ENCODE measurements at regions of chr19 and their contacts with region 1.

Region 1: DNA sequence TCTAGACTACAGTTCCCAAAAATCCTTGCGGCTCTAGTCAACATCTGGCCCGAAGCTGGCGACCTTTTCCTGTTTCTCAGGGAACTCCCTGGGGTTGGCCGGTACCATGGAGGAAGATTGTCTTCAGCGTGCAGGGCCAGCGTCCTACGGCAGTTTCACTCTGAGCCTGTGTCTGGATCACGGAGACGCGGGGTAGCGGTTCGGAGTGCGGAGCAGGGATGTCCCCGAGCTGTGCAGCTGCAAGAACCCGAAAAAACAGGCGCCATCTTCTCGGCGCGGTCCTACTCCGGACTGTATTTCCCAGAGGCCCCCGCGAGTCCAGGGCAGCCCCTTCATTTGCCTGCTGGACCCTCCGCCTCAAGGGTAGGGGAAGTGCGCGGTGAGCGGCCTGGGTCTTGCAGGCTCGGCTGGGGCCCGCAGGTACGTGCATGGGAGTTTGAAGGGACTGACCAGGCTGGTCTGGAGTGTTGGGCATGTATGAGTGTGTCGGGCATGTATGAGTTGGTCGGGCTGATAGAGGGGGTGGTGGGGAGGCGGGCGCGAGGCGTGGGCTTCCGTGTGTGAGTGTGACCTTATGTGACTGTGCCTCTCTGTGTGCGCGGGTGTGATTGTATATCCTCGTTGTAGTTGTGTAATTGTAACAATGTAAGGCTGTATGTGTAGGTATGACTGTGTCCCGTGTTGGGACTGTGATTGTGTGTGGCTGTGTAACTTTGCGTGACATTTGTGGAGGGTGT is at the start of gene ZNF383:
- DNase-seq: peak; percentile 63 to 81 (median 78)
- ATAC-seq: peak; percentile 95
- H3K4me3 ChIP-seq: peak within 1 kb of the TSS; percentile 93
- H3K4me3 Mint-ChIP-seq: peak within 1 kb of the TSS; percentile 90 to 97 (median 92)
- H3K27ac ChIP-seq: peak within 1 kb of the TSS; percentile 94
- H3K27ac Mint-ChIP-seq: peak within 1 kb of the TSS; percentile 74 to 99 (median 91)
- H3K4me1 ChIP-seq: peaks cover 0 to 6% of the 10 kb centered on the region in 2 donors
- H3K4me1 Mint-ChIP-seq: peaks cover 21 to 33% (median 31%) of the 10 kb centered on the region in 7 donors
- H3K27me3 ChIP-seq: no peaks in the 10 kb centered on the region
- H3K27me3 Mint-ChIP-seq: no peaks in the 10 kb centered on the region
- total RNA-seq, gene ZNF383: 12.2 to 33.4 (median 21.2) TPM

Region 2: DNA sequence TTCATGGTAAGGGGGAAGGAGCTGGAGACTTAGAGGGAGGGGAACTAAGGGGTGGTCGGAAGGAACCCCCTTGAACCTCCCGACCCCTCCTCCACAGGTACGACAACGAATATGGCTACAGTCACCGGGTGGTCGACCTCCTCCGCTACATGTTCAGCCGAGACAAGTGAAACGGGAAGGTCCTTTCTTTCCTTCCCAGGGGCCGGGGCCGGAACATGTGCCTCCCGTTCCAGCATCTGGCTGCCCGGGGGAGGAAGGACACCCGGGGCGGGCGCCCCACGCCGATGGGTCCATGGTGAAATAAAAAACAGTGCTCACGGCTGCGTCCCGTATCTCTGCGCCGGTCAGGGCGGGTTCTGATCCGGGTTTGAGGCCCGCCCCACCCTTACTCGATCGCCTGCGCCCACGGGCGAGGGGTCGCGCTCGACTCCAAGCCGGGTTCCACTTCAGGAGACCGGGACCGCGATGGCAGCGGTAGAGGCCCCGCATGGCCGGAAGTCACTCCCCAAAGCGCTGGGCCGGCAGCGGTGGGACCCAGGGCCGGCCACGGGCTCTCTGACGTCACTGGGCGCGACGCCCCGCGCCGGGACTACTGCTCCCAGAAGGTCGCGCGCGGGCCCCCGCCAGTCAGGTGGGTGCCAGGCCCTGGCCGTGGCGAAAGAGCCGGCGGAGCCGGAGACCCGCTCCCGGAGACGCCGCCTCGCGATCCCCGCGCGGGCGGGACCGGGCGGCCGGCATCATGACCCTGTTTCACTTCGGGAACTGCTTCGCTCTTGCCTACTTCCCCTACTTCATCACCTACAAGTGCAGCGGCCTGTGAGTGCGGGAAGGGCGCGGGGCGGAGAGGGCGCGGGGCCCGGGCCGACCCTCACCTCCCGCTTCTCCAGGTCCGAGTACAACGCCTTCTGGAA is 1672.8 kb before region 1 on chr19 and contains the start of gene TMEM147:
- CTCF ChIA-PET with region 1: no interaction called
- POLR2A ChIA-PET with region 1: no interaction called
- intact Hi-C with region 1: no loop called
- DNase-seq: peak; percentile 60 to 90 (median 69)
- ATAC-seq: peak; percentile 91
- H3K4me3 ChIP-seq: peak within 1 kb of the TSS; percentile 78
- H3K4me3 Mint-ChIP-seq: peak within 1 kb of the TSS; percentile 79 to 93 (median 89)
- H3K27ac ChIP-seq: peak within 1 kb of the TSS; percentile 84
- H3K27ac Mint-ChIP-seq: peak within 1 kb of the TSS; percentile 52 to 96 (median 90)
- H3K4me1 ChIP-seq: peaks cover 13 to 16% of the 10 kb centered on the region in 2 donors
- H3K4me1 Mint-ChIP-seq: peaks cover 27 to 41% (median 38%) of the 10 kb centered on the region in 7 donors
- H3K27me3 ChIP-seq: no peaks in the 10 kb centered on the region
- H3K27me3 Mint-ChIP-seq: no peaks in the 10 kb centered on the region
- total RNA-seq, gene TMEM147: 24.7 to 54.0 (median 34.6) TPM

Region 3: GRCh38 chr19:36054119-36054732 is 1163.8 kb before region 1 on chr19 and contains the start of gene THAP8:
- CTCF ChIA-PET with region 1: no interaction called
- POLR2A ChIA-PET with region 1: no interaction called
- intact Hi-C with region 1: loop called in 1 of 2 experiments (anchors 5 kb)
- DNase-seq: peak; percentile 96 to 100 (median 100)
- ATAC-seq: peak; percentile 91
- H3K4me3 ChIP-seq: peak within 1 kb of the TSS; percentile 84
- H3K4me3 Mint-ChIP-seq: peak within 1 kb of the TSS; percentile 91 to 100 (median 99)
- H3K27ac ChIP-seq: peak within 1 kb of the TSS; percentile 83
- H3K27ac Mint-ChIP-seq: peak within 1 kb of the TSS; percentile 94 to 100 (median 98)
- H3K4me1 ChIP-seq: peaks cover 8 to 10% of the 10 kb centered on the region in 2 donors
- H3K4me1 Mint-ChIP-seq: peaks cover 6 to 43% (median 34%) of the 10 kb centered on the region in 7 donors
- H3K27me3 ChIP-seq: no peaks in the 10 kb centered on the region
- H3K27me3 Mint-ChIP-seq: no peaks in the 10 kb centered on the region
- total RNA-seq, gene THAP8: 2.2 to 6.6 (median 6.1) TPM

Region 4: DNA sequence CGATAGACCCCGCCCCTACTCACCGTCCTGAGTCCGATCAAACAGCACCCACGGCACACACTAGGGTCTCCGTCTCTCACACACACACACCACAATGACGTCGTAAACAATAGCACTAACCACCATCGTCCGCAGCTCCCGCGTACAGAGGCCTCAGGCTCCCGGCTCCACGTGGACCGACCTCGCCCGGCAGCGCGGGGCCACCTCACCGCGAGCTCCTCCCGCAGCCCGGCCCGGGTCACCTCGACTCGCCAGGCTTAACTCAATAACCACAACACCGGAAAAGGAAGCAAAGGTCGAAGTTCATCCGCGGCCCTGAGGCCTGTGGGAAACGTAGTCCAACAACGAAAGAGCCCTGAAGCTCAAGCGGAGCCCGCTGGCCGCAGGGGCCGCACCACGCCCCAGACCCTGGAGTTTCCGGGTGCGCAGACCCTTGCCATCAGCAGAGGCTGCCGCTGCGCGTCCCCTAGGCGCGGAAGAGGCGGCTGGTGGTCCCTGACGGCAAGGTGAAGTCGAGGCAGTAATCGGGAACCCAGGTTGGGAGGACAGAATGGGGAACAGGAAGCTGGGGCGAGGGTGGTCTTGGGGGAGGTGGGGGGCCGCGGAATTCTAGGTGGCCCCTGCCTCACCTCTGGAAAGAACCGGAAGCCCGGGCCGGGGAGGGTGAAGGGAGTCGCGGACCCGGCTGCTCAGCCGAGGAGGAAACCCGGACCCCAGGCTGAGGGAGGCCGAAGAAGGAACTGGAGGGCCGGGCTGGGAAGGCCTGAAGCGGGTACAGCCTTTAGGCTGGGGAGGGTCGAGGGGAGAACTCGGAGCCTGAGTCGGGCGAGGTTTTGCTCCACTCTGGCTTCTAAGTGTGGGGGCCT is 644.8 kb before region 1 on chr19 and contains the start of gene ZNF529:
- CTCF ChIA-PET with region 1: no interaction called
- POLR2A ChIA-PET with region 1: no interaction called
- intact Hi-C with region 1: loop called in 1 of 2 experiments (anchors 10 kb)
- DNase-seq: peak; percentile 67 to 95 (median 85)
- ATAC-seq: peak; percentile 95
- H3K4me3 ChIP-seq: peak within 1 kb of the TSS; percentile 95
- H3K4me3 Mint-ChIP-seq: peak within 1 kb of the TSS; percentile 80 to 100 (median 93)
- H3K27ac ChIP-seq: peak within 1 kb of the TSS; percentile 98
- H3K27ac Mint-ChIP-seq: peak within 1 kb of the TSS; percentile 94 to 100 (median 98)
- H3K4me1 ChIP-seq: peaks cover 0 to 15% of the 10 kb centered on the region in 2 donors
- H3K4me1 Mint-ChIP-seq: peaks cover 23 to 46% (median 40%) of the 10 kb centered on the region in 7 donors
- H3K27me3 ChIP-seq: no peaks in the 10 kb centered on the region
- H3K27me3 Mint-ChIP-seq: no peaks in the 10 kb centered on the region
- total RNA-seq, gene ZNF529: 22.6 to 37.8 (median 33.8) TPM

Region 5: GRCh38 chr19:36850559-36851442 is 367.2 kb before region 1 on chr19 and contains the start of gene ZNF345:
- CTCF ChIA-PET with region 1: no interaction called
- POLR2A ChIA-PET with region 1: interaction called, 5 read pairs
- intact Hi-C with region 1: loop called (anchors 1 kb)
- DNase-seq: peak; percentile 62 to 91 (median 88)
- ATAC-seq: peak; percentile 93
- H3K4me3 ChIP-seq: peak within 1 kb of the TSS; percentile 92
- H3K4me3 Mint-ChIP-seq: no peak within 1 kb of the TSS
- H3K27ac ChIP-seq: peak within 1 kb of the TSS; percentile 86
- H3K27ac Mint-ChIP-seq: no peak within 1 kb of the TSS
- H3K4me1 ChIP-seq: peaks cover 9 to 16% of the 10 kb centered on the region in 2 donors
- H3K4me1 Mint-ChIP-seq: peaks cover 0 to 22% (median 13%) of the 10 kb centered on the region in 7 donors
- H3K27me3 ChIP-seq: no peaks in the 10 kb centered on the region
- H3K27me3 Mint-ChIP-seq: no peaks in the 10 kb centered on the region
- total RNA-seq, gene ZNF345: 6.8 to 18.2 (median 7.8) TPM

Region 6: DNA sequence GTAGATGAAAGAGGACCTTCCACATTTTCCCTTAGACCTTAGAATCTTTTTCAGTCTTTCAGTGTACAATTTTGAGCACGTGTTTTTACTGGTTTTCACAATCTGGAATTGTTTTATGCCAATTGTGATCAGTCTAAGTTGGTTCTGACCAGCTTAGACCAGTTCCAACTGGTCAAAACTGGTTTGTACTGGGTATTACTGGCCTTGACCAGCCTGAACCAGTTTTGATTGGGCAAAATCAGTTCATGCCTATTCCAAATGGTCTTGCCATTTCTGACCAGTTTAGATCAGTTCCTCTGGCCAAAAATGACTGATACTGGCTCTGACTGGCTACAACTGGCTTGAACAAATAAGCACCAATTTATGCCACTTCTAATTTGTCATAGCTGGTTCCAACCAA is 81.9 kb before region 1 on chr19:
- CTCF ChIA-PET with region 1: no interaction called
- POLR2A ChIA-PET with region 1: no interaction called
- intact Hi-C with region 1: no loop called
- DNase-seq: no peak
- ATAC-seq: no peak
- H3K4me3 ChIP-seq: no peak overlapping the region
- H3K4me3 Mint-ChIP-seq: no peak overlapping the region
- H3K27ac ChIP-seq: no peak overlapping the region
- H3K27ac Mint-ChIP-seq: no peak overlapping the region
- H3K4me1 ChIP-seq: no peaks in the 10 kb centered on the region
- H3K4me1 Mint-ChIP-seq: no peaks in the 10 kb centered on the region
- H3K27me3 ChIP-seq: no peaks in the 10 kb centered on the region
- H3K27me3 Mint-ChIP-seq: no peaks in the 10 kb centered on the region

Region 7: DNA sequence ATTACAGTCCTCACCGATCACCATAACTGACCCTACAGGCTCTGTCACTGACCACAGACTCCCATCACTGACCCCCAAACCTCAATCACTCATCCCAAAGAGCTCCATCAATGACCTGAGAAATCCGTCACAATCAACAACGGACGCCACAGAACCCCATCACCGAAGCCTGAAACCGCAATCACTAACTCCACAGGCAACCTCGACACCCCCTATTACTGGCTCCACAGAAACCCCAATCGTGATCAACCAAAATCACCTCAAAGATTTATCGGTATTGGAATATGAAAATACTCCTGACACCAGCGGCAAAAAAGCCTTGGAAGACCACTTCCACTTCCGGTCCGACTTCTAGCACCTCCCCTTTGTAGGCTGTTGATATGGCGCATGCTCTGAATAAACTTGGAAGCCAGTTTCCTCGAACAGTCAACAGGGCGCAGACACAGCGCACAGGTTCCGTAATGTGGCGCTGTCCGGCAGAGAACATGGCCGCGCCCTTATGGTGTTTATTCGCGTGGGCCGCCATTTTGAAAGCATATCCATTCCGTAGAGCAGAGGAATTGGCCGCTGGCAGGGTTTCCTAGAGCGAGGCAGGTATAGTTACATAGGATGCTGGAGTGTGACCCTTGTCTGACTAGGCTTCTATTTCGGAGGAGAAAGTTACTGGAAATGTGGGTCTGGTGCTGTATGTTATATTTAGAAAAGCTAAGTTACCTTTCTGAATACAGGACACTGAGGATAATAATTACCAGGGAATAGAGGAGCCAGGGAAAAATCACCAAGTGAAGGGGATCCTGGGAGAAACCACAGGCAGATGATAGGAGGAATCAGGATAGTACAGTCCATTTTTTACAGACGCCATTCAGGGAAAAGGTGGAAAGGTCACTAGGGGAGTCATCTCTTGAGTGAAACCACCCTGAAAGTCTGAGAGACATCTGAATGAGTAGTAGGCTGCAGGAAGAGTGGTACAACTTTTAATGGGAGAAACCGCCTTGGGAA is 45.4 kb before region 1 on chr19 and contains the start of gene ZNF585A:
- CTCF ChIA-PET with region 1: no interaction called
- POLR2A ChIA-PET with region 1: interaction called, 5 read pairs
- intact Hi-C with region 1: loop called (anchors 1 kb)
- DNase-seq: peak; percentile 68 to 92 (median 88)
- ATAC-seq: peak; percentile 100
- H3K4me3 ChIP-seq: peak within 1 kb of the TSS; percentile 90
- H3K4me3 Mint-ChIP-seq: peak within 1 kb of the TSS in 3 of 10 donors; percentile 36 to 73 (median 39)
- H3K27ac ChIP-seq: peak within 1 kb of the TSS; percentile 84
- H3K27ac Mint-ChIP-seq: no peak within 1 kb of the TSS
- H3K4me1 ChIP-seq: no peaks in the 10 kb centered on the region
- H3K4me1 Mint-ChIP-seq: peaks cover 0 to 16% (median 4%) of the 10 kb centered on the region in 7 donors
- H3K27me3 ChIP-seq: no peaks in the 10 kb centered on the region
- H3K27me3 Mint-ChIP-seq: no peaks in the 10 kb centered on the region
- total RNA-seq, gene ZNF585A: 3.5 to 24.3 (median 7.2) TPM

Region 8: DNA sequence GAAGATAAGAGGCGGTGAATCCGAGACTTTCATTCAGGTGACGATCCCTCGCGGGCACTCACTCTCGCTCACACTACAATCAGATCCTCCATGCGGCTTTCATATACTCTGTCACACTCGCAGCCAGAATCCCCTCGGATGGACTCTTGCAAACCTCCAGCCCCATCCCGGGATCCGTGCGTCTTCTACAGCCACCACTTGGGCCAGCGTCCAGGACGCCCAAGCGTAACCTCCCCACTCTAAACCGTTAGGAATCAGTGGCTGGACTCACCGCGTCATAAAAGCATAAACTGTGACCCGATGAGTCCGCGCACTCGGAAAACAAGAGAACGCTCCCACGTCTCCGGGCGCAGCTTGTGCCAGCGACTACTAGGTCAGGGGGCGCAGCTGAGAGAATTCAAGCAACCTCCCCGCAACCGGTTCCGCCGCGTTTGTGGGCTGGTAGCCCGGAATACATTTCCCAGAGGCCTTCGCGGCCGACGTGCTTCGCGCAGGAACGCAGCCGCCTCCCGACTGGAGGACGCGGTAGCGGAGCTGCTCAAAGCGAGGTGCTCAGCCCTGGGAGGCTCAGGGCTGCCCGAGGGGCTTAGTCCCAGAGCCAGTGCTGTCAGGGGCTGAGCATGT is 474.0 kb after region 1 on chr19:
- CTCF ChIA-PET with region 1: no interaction called
- POLR2A ChIA-PET with region 1: no interaction called
- intact Hi-C with region 1: loop called in 1 of 2 experiments (anchors 10 kb)
- DNase-seq: peak; percentile 52 to 83 (median 73)
- ATAC-seq: peak; percentile 97
- H3K4me3 ChIP-seq: peak overlapping the region; percentile 95
- H3K4me3 Mint-ChIP-seq: peak overlapping the region; percentile 83 to 98 (median 96)
- H3K27ac ChIP-seq: peak overlapping the region; percentile 82
- H3K27ac Mint-ChIP-seq: peak overlapping the region; percentile 69 to 98 (median 96)
- H3K4me1 ChIP-seq: peaks cover 0 to 4% of the 10 kb centered on the region in 2 donors
- H3K4me1 Mint-ChIP-seq: peaks cover 5 to 17% (median 11%) of the 10 kb centered on the region in 7 donors
- H3K27me3 ChIP-seq: no peaks in the 10 kb centered on the region
- H3K27me3 Mint-ChIP-seq: no peaks in the 10 kb centered on the region

Measured in naive thymus-derived CD4-positive, alpha-beta T cell (primary cell).